ENCODE measurements at regions of chr11 and their contacts with region 1.

Region 1: DNA sequence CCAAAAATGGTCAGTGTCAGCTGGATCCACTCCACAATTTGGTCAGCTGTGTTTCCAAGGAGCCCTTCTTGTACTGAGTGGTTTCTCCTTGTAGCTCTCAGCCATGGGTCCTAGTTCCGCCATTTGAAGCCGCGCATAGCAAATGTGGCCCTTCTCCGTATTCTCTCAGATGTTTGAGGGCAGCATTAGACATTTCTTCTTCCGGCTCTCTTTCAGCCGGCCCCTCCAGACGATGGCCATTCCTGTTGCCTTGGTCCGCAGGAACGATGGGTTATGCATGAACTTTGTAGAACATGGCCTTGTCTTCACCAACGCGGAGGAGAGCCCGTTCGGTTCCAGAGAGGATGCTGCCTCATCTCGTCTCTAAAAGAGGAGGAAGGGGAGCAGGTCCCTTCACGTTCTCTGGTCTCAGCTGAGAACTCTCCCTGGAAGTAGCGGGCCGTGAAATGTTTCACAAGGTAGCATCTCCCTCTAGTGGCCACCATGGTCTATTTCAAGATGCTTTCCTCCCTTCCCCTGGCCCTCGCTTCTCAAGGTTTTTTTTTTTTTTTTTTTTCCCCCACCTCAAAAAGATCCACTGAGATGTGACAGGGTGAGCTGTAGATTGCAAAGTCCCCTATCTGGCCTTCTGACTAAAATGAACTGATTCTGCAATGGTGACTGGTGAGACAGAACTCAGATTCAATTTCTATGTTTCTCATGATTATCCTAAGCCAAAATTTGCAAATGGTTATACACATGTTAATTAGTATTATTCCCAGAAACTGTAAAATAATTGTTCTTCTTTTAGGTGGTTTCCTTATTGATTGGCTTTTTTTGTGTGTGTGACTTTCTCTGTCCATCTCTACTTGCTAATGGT is 19.8 kb upstream of the PLET1 start:
- DNase-seq: peak; percentile 77
- H3K4me3 Mint-ChIP-seq: peak overlapping the region; percentile 81
- H3K27ac Mint-ChIP-seq: peak overlapping the region; percentile 57
- H3K4me1 Mint-ChIP-seq: peaks cover 33% of the 10 kb centered on the region
- H3K27me3 Mint-ChIP-seq: peaks cover 7% of the 10 kb centered on the region

Region 2: DNA sequence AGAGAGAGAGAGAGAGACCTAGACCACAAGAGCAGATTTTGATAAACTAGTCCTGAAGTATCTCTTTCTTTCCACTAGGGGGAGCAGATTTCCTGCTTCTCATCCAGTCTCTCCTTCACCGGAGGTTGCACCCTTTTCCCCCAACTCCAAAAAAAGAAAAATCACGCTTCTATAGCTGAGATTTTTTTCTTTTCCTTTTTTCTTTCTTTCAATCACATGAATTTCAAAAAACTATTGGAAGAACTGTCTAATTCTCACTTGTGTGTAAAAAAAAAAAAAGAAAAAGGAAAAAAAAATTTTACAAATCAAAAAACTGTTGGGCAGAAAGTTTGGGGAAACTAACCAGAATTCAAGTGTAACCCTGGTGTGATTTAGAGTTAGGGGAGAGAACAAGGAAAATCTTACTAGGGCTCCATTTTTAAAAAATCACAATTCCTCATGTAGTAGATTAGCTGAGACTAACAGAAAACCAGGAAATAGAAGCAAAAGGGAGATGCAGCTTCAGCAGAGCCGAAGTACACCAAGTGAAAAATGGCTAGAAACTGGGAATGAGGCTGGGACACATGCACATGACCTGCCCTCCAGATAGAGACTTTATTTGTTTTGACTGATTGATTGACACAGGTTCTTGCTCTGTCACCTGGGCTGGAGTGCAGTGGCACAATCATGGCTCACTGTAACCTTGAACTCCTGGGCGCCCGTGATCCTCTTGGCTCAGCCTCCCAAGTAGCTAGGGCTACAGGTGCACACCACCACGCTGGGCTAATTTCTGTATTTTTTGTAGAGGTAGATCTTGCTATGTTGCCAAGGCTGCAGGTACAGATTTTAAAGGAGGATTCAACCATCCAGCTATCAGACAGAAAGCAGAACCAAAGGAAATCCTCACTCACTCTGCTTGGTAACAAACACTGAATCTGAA is 166.7 kb before region 1 on chr11:
- CTCF ChIA-PET with region 1: interaction called, 35 read pairs
- DNase-seq: no peak
- H3K4me3 Mint-ChIP-seq: no peak overlapping the region
- H3K27ac Mint-ChIP-seq: no peak overlapping the region
- H3K4me1 Mint-ChIP-seq: peaks cover 12% of the 10 kb centered on the region
- H3K27me3 Mint-ChIP-seq: no peaks in the 10 kb centered on the region

Region 3: DNA sequence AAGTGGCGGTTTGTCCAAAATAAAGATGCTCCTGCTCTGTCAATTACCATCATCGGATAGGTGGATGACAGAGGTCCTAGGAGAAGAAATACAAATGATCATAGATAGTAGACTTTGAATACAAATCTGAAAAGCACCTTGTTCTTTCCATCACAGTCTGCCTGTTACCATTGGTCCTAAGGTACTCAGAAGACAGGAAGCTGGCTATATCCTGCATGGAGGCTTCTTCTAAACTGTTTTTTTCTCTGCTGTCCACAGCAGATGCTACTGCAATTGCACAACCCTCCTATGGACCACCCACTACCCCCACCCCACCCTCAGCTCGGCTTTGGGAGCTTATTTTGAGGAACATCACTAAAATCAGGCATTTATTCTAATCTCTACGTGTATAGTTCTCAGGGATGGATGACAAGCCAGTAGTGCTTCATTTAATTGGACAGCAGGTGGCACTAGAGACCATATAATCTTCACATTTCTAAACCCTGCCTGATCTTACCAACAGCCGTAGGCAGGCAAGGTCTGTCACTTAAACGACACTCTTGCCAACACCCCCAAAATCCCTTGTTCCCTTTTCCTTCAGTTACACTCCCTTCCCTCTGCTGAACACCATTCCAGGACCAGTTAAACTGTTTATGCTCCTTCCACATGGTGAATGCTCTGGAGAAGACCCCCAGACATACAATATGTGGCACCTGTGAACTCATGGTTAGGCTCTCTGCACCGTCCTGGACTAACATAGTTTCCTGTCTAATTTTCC is 60.8 kb before region 1 on chr11:
- CTCF ChIA-PET with region 1: interaction called, 302 read pairs
- DNase-seq: peak; percentile 49
- H3K4me3 Mint-ChIP-seq: no peak overlapping the region
- H3K27ac Mint-ChIP-seq: no peak overlapping the region
- H3K4me1 Mint-ChIP-seq: peaks cover 6% of the 10 kb centered on the region
- H3K27me3 Mint-ChIP-seq: peaks cover 14% of the 10 kb centered on the region

Region 4: GRCh38 chr11:112231952-112232351 is 48.5 kb before region 1 on chr11:
- CTCF ChIA-PET with region 1: interaction called, 302 read pairs
- DNase-seq: no peak
- H3K4me3 Mint-ChIP-seq: no peak overlapping the region
- H3K27ac Mint-ChIP-seq: no peak overlapping the region
- H3K4me1 Mint-ChIP-seq: peaks cover 17% of the 10 kb centered on the region
- H3K27me3 Mint-ChIP-seq: no peaks in the 10 kb centered on the region

Region 5: DNA sequence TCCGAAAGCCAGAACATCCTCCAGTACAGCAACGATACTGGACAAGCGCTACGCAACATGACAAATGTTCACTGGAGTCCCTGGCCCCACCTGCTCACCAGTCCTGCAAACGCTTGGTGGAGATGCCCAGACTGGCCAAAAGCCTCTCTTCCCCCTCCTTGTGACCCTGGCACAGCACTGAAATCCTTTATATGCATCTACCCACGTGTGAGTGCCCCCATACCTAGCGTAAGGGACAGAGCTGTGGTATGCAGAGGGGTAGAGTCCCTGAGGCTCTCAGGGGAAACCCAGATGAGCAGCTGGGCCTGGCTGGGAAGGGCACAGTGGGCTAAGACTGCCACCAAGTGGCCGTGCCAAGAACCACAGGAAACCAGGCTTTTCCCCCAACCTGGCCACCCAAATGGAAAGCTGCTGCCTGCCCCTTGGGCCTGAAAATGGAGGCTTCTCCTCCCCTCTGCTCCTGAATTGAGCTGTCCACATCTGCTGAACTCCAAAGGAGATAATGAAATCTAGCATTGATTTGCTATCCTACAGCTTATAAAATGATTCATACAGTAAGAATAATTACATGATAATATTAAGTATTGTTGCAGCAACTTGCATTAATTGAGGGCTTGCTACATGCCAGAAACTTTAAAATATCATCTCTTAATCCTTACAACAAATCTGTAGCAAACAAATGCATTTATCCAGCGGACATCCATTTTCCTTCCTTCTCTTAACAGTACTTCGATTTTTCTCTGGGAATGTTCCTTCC is 1009.1 kb after region 1 on chr11:
- CTCF ChIA-PET with region 1: interaction called, 10 read pairs
- DNase-seq: peak; percentile 70
- H3K4me3 Mint-ChIP-seq: no peak overlapping the region
- H3K27ac Mint-ChIP-seq: no peak overlapping the region
- H3K4me1 Mint-ChIP-seq: no peaks in the 10 kb centered on the region
- H3K27me3 Mint-ChIP-seq: no peaks in the 10 kb centered on the region